Activated naive CD8-positive, alpha-beta T cell treated with anti-CD3 and anti-CD28 coated beads, Interleukin-2, amount 10 ng/mL, durations not matched to agents 7 days and 5 days (primary cell): ENCODE measurements at regions of chr12 and their contacts with region 1.

Region 1: GRCh38 chr12:57751788-57752667 is at the start of gene CDK4:
- DNase-seq: peak; percentile 99
- ATAC-seq: peak; percentile 77
- H3K4me3 Mint-ChIP-seq: peak within 1 kb of the TSS; percentile 93
- H3K27ac Mint-ChIP-seq: peak within 1 kb of the TSS; percentile 83
- H3K4me1 Mint-ChIP-seq: peaks cover 40% of the 10 kb centered on the region
- H3K27me3 Mint-ChIP-seq: no peaks in the 10 kb centered on the region
- total RNA-seq, gene CDK4: 98.4 to 100 TPM

Region 2: DNA sequence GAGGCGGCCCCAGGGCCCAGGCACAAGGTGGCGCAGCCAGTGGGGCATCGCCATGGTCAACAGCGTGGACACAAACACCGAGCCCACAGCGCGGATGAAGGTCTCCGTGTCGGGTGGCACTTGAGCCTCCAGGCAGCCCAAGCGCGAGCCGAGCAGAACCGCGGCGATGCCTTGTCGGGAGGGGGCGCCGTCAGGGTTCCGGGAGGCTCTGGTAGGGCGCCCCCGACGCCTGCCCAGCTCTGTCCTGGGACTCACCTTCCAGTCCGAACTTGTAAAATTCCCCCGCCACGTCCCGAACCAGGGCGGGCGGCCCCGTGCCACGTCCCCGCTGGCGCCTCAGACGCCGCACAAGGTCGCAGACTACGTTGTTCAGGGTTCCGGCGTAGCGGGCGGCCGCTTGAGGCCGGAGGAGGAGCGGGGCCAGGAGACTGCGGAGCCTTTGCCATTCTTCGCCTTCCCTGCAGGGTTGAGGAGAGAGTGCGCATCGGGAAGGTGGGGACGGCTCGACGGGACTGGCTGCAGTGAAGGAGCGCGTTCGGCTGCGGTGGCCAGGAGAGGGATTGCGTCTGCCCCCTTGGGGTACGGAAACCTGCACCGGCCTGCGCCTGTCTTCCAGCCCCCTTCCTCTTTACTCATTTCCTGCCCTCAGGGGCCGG is 13.1 kb after region 1 on chr12:
- POLR2A ChIA-PET with region 1: interaction called, 20 read pairs
- DNase-seq: peak; percentile 74
- ATAC-seq: peak; percentile 82
- H3K4me3 Mint-ChIP-seq: peak overlapping the region; percentile 89
- H3K27ac Mint-ChIP-seq: peak overlapping the region; percentile 28
- H3K4me1 Mint-ChIP-seq: peaks cover 18% of the 10 kb centered on the region
- H3K27me3 Mint-ChIP-seq: peaks cover 11% of the 10 kb centered on the region